ENCODE measurements at regions of chr18 and their contacts with region 1.

Region 1: DNA sequence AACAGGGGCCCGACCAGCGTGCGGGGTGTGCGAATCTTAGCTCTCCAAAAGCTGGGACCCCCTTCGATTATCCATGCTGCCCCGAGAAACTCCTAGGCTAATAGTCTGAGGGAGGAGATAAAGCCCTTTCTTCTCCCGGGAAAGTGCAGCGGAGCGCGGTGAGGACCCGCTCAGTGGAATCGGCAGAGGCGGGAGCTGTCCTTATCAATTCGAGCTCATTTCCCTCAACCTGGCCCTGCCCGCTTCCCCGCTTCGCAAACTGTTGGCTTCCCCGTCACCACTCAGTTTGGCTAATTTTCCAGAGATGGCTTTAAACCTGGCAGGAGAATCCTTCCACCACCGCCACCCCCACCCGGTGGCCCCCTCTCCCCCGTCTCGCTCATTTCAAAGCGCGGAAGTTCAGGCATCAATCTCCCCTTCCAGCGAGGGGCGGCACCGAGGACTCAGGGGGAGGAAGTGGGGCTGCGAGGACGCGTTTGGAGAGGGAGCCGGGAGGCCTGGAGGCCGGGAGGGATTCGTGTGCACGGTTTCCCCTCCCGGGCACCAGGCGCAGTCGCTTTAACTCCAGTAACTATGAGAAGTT is 1.6 kb downstream of the KLHL14 start:
- DNase-seq: peak; percentile 56
- ATAC-seq: peak; percentile 26
- H3K4me3 ChIP-seq: peak overlapping the region; percentile 65 to 93 (median 82)
- H3K4me3 Mint-ChIP-seq: peak overlapping the region; percentile 99
- H3K27ac ChIP-seq: peak overlapping the region; percentile 75
- H3K27ac Mint-ChIP-seq: peak overlapping the region; percentile 93
- H3K4me1 ChIP-seq: peaks cover 43 to 48% of the 10 kb centered on the region in 2 donors
- H3K4me1 Mint-ChIP-seq: peaks cover 53% of the 10 kb centered on the region
- H3K27me3 ChIP-seq: no peaks in the 10 kb centered on the region
- H3K27me3 Mint-ChIP-seq: no peaks in the 10 kb centered on the region
- CTCF ChIP-seq: no peak

Region 2: DNA sequence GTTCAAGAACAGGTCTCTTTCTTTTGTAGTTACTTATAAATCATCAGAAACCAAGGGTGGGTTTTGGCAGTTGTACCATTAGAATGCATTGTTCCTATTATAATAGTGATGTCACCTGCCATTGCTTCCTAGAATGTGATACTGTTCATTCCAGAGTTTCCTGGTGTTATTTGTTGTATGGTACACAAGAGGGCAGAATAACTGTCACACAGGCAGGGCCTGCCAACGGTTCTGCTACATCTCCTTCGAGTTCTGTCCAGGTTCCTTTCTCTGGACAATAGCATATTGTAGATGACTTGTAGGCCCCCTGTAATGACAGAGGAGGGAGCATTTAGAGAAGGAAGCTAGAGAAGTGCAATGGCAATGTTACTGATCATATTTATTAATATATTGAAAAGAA is 96.8 kb before region 1 on chr18:
- CTCF ChIA-PET with region 1: no interaction called
- POLR2A ChIA-PET with region 1: no interaction called
- intact Hi-C with region 1: no loop called
- DNase-seq: no peak
- ATAC-seq: no peak
- H3K4me3 ChIP-seq: no peak overlapping the region
- H3K4me3 Mint-ChIP-seq: no peak overlapping the region
- H3K27ac ChIP-seq: no peak overlapping the region
- H3K27ac Mint-ChIP-seq: no peak overlapping the region
- H3K4me1 ChIP-seq: no peaks in the 10 kb centered on the region
- H3K4me1 Mint-ChIP-seq: no peaks in the 10 kb centered on the region
- H3K27me3 ChIP-seq: no peaks in the 10 kb centered on the region
- H3K27me3 Mint-ChIP-seq: no peaks in the 10 kb centered on the region
- CTCF ChIP-seq: no peak

Region 3: GRCh38 chr18:32753656-32754260 is 17.5 kb before region 1 on chr18:
- CTCF ChIA-PET with region 1: interaction called, 4 read pairs
- POLR2A ChIA-PET with region 1: interaction called, 10 read pairs
- intact Hi-C with region 1: no loop called
- DNase-seq: peak; percentile 4
- ATAC-seq: no peak
- H3K4me3 ChIP-seq: no peak overlapping the region
- H3K4me3 Mint-ChIP-seq: no peak overlapping the region
- H3K27ac ChIP-seq: no peak overlapping the region
- H3K27ac Mint-ChIP-seq: no peak overlapping the region
- H3K4me1 ChIP-seq: peaks cover 35 to 46% of the 10 kb centered on the region in 2 donors
- H3K4me1 Mint-ChIP-seq: peaks cover 74% of the 10 kb centered on the region
- H3K27me3 ChIP-seq: no peaks in the 10 kb centered on the region
- H3K27me3 Mint-ChIP-seq: no peaks in the 10 kb centered on the region
- CTCF ChIP-seq: no peak

Region 4: GRCh38 chr18:32803568-32803967 is 32.3 kb after region 1 on chr18:
- CTCF ChIA-PET with region 1: interaction called, 16 read pairs
- POLR2A ChIA-PET with region 1: interaction called, 47 read pairs
- intact Hi-C with region 1: loop called (anchors 1 kb)
- DNase-seq: peak; percentile 84
- ATAC-seq: peak; percentile 91
- H3K4me3 ChIP-seq: peak overlapping the region in 2 of 5 experiments; percentile 37 to 43
- H3K4me3 Mint-ChIP-seq: peak overlapping the region; percentile 80
- H3K27ac ChIP-seq: peak overlapping the region; percentile 88 to 91
- H3K27ac Mint-ChIP-seq: peak overlapping the region; percentile 96
- H3K4me1 ChIP-seq: peaks cover 43 to 46% of the 10 kb centered on the region in 2 donors
- H3K4me1 Mint-ChIP-seq: peaks cover 53% of the 10 kb centered on the region
- H3K27me3 ChIP-seq: no peaks in the 10 kb centered on the region
- H3K27me3 Mint-ChIP-seq: no peaks in the 10 kb centered on the region
- CTCF ChIP-seq: no peak

Region 5: DNA sequence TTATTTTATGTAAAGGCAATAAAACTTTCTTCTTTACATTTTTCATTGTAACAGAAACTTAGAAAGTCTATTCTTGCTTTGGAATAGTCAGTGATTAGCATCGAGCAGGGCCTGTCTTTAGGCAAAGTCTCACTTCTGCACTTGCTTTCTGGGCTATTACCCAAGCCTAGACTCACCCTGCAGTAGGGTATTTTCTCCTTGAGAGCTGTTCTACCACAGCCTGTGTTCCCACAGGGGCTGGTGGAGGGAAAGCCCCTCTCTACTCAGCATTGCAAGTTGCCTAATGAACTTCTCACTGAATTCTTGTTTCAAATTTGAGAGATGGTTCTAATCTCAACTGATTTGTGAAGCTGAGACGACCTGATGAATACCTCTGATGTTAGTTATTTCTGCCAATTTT is 113.3 kb after region 1 on chr18:
- CTCF ChIA-PET with region 1: interaction called, 5 read pairs
- POLR2A ChIA-PET with region 1: interaction called, 7 read pairs
- intact Hi-C with region 1: loop called (anchors 5 kb)
- DNase-seq: peak; percentile 87
- ATAC-seq: peak; percentile 99
- H3K4me3 ChIP-seq: no peak overlapping the region
- H3K4me3 Mint-ChIP-seq: peak overlapping the region; percentile 71
- H3K27ac ChIP-seq: peak overlapping the region; percentile 78 to 79
- H3K27ac Mint-ChIP-seq: peak overlapping the region; percentile 88
- H3K4me1 ChIP-seq: peaks cover 68 to 70% of the 10 kb centered on the region in 2 donors
- H3K4me1 Mint-ChIP-seq: peaks cover 76% of the 10 kb centered on the region
- H3K27me3 ChIP-seq: no peaks in the 10 kb centered on the region
- H3K27me3 Mint-ChIP-seq: no peaks in the 10 kb centered on the region
- CTCF ChIP-seq: no peak

Measured in B cell (primary cell).